ENCODE measurements at regions of chr19 and their contacts with region 1.

Region 1: DNA sequence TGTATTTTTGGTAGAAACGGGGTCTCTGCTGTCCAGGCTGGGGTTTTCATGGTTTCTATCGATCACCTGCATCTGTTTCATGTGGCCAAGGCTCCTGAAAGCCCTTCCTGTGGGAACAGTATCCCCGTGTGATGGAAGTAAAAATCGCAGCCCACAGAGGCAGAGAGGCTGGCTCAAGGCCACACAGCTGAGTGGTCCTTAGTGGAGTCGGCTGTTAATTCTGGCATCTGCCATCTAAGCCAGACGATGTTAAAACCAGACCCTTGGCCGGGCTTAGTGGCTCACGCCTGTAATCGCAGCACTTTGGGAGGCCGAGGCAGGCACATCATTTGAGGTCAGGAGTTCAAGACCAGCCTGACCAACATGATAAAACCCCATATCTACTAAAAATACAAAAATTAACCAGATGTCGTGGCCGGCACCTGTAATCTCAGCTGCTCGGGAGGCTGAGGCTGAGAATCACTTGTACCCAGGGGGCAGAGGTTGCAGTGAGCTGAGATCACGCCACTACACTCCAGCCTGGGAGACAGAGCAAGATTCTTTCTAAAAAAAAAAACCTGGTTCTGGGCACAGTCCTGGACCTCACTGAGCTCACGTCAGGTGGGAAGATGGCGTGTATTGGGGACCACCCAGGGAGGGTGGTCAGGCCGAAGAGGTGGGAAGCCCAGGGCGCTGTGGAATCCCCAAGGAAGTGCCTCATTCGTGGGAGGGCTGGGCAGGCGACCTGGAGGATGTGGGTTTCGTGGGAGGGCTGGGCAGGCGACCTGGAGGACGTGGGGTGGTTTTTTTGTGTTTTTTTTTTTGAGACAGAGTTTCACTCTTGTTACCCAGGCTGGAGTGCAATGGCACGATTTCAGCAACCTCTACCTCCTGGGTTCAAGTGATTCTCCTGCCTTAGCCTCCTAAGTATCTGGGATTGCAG is 18.5 kb upstream of the MISP start:
- DNase-seq: no peak
- H3K4me3 ChIP-seq: no peak overlapping the region
- H3K27ac ChIP-seq: no peak overlapping the region
- H3K4me1 ChIP-seq: no peaks in the 10 kb centered on the region
- H3K27me3 ChIP-seq: no peaks in the 10 kb centered on the region
- CTCF ChIP-seq: no peak

Region 2: GRCh38 chr19:588093-588740 is 144.2 kb before region 1 on chr19:
- intact Hi-C with region 1: loop called (anchors 5 kb)
- DNase-seq: peak; percentile 67
- H3K4me3 ChIP-seq: no peak overlapping the region
- H3K27ac ChIP-seq: no peak overlapping the region
- H3K4me1 ChIP-seq: peaks cover 4% of the 10 kb centered on the region
- H3K27me3 ChIP-seq: peaks cover 36% of the 10 kb centered on the region
- CTCF ChIP-seq: peak; percentile 49

Region 3: DNA sequence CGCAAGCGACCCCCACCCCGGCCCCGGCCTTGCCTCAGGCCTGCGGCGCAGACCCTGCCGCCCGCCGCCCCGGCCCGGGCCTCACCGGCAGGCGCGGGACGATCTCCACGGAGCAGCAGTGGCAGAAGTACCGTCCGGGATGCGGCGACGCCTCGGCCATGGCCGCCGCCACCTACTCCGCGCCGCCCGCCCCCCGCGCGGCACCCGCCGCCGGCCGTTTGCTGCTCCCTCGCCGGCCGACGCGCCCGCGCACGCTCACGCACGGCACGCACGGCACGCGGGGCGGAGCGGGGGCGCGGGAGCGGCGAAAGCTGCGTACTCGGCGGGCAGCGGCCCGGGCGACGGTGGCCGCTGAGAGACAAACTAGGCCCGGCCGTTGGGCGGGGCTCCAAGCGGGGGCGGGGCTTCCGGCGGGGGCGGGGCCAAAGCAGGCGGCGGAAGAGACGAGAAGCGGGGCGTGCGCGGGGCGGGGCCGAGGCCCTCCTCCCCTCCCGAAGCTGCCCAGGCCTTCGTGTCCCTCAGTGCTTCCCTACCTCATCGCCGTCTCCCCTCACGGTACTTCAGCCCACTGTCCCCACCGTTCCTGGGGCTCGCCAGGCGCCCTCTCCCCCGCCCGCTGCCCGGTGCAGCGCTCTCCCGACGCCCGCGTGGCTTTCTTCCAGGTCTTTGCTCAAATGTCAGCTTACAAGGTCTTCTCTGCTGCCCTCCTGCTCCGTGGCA is 69.3 kb before region 1 on chr19 and contains the start of gene RNF126:
- intact Hi-C with region 1: loop called (anchors 1 kb)
- DNase-seq: peak; percentile 94
- H3K4me3 ChIP-seq: peak within 1 kb of the TSS; percentile 100
- H3K27ac ChIP-seq: peak within 1 kb of the TSS; percentile 89
- H3K4me1 ChIP-seq: peaks cover 34% of the 10 kb centered on the region
- H3K27me3 ChIP-seq: no peaks in the 10 kb centered on the region
- CTCF ChIP-seq: no peak
- total RNA-seq, gene RNF126: 54.6 to 74.7 TPM

Region 4: DNA sequence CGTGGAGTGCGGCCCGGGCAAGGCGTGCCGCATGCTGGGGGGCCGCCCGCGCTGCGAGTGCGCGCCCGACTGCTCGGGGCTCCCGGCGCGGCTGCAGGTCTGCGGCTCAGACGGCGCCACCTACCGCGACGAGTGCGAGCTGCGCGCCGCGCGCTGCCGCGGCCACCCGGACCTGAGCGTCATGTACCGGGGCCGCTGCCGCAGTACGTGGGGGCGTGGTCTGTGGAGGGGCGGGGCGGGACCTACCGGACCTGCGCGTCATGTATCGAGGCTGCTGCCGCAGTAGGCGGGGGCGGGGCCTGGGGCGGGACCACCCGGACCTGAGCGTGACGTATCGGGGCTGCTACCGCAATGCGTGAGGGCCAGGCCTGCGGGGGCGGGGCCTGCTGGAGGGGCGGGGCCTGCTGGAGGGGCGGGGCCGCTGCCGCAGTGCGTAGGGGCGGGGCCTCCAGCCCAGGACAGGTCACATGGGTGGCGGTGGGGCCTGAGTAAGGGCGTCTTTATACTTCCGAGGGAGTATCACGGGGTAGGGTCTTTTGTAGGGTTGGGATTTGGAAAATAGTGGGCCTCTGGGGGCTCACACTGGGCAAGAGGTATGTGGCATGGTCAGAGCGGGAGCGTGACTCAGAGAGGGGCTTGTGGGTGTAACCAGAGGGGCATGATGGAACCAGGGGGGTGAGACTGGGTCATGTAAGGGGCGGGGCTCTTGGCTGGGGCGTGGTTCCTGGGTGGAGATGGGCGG is 52.0 kb before region 1 on chr19:
- intact Hi-C with region 1: no loop called
- DNase-seq: peak; percentile 100
- H3K4me3 ChIP-seq: peak overlapping the region; percentile 58
- H3K27ac ChIP-seq: peak overlapping the region; percentile 81
- H3K4me1 ChIP-seq: no peaks in the 10 kb centered on the region
- H3K27me3 ChIP-seq: peaks cover 12% of the 10 kb centered on the region
- CTCF ChIP-seq: peak; percentile 24

Measured in colonic mucosa (tissue), 4 donors.